ENCODE measurements at regions of chr19 and their contacts with region 1.

Region 1: GRCh38 chr19:49451430-49452181 is at the start of gene PIH1D1:
- DNase-seq: peak; percentile 99
- ATAC-seq: peak; percentile 69
- H3K4me3 ChIP-seq: peak within 1 kb of the TSS; percentile 98 to 100
- H3K27ac ChIP-seq: peak within 1 kb of the TSS; percentile 91
- H3K4me1 ChIP-seq: peaks cover 23 to 40% of the 10 kb centered on the region in 2 experiments; a peak in 3 of 4 replicates
- H3K27me3 ChIP-seq: no peaks in the 10 kb centered on the region
- CTCF ChIP-seq: peak in 1 of 3 experiments; percentile 32; a peak in 1 of 6 replicates
- POLR2A ChIP-seq: peak; percentile 86
- RAD21 ChIP-seq: no peak
- total RNA-seq, gene PIH1D1: 152 TPM

Region 2: GRCh38 chr19:49309087-49309486 is 142.5 kb before region 1 on chr19:
- CTCF ChIA-PET with region 1: no interaction called
- POLR2A ChIA-PET with region 1: no interaction called
- RAD21 ChIA-PET with region 1: no interaction called
- intact Hi-C with region 1: no loop called
- DNase-seq: no peak
- ATAC-seq: no peak
- H3K4me3 ChIP-seq: no peak overlapping the region
- H3K27ac ChIP-seq: no peak overlapping the region
- H3K4me1 ChIP-seq: no peaks in the 10 kb centered on the region
- H3K27me3 ChIP-seq: no peaks in the 10 kb centered on the region
- CTCF ChIP-seq: no peak
- POLR2A ChIP-seq: no peak
- RAD21 ChIP-seq: no peak

Region 3: GRCh38 chr19:49363268-49364082 is 88.1 kb before region 1 on chr19 and contains the start of gene DKKL1:
- CTCF ChIA-PET with region 1: no interaction called
- POLR2A ChIA-PET with region 1: interaction called, 14 read pairs
- RAD21 ChIA-PET with region 1: no interaction called
- intact Hi-C with region 1: no loop called
- DNase-seq: peak; percentile 99
- ATAC-seq: peak; percentile 86
- H3K4me3 ChIP-seq: peak within 1 kb of the TSS; percentile 93
- H3K27ac ChIP-seq: peak within 1 kb of the TSS; percentile 94
- H3K4me1 ChIP-seq: peaks cover 10 to 27% of the 10 kb centered on the region in 2 experiments
- H3K27me3 ChIP-seq: no peaks in the 10 kb centered on the region
- CTCF ChIP-seq: peak in 1 of 3 experiments; percentile 22; a peak in 3 of 6 replicates
- POLR2A ChIP-seq: no peak
- RAD21 ChIP-seq: no peak; the same call in none of the 2 replicates
- total RNA-seq, gene DKKL1: 1.0 TPM

Region 4: GRCh38 chr19:49473868-49474544 is 22.4 kb after region 1 on chr19 and contains the start of gene FLT3LG:
- CTCF ChIA-PET with region 1: interaction called, 11 read pairs
- POLR2A ChIA-PET with region 1: interaction called, 7 read pairs
- RAD21 ChIA-PET with region 1: interaction called in 1 of 2 experiments, 3 read pairs
- intact Hi-C with region 1: no loop called
- DNase-seq: no peak
- ATAC-seq: peak; percentile 41
- H3K4me3 ChIP-seq: peak within 1 kb of the TSS; percentile 54 to 71
- H3K27ac ChIP-seq: 0 out of 2 replicates have a peak within 1 kb of the TSS, but pooled peaks have one; percentile 19
- H3K4me1 ChIP-seq: peaks cover 33 to 57% of the 10 kb centered on the region in 2 experiments
- H3K27me3 ChIP-seq: no peaks in the 10 kb centered on the region
- CTCF ChIP-seq: peak; percentile 95 to 98 (median 95)
- POLR2A ChIP-seq: peak; percentile 23
- RAD21 ChIP-seq: peak; percentile 63
- total RNA-seq, gene FLT3LG: 3.8 TPM

Region 5: DNA sequence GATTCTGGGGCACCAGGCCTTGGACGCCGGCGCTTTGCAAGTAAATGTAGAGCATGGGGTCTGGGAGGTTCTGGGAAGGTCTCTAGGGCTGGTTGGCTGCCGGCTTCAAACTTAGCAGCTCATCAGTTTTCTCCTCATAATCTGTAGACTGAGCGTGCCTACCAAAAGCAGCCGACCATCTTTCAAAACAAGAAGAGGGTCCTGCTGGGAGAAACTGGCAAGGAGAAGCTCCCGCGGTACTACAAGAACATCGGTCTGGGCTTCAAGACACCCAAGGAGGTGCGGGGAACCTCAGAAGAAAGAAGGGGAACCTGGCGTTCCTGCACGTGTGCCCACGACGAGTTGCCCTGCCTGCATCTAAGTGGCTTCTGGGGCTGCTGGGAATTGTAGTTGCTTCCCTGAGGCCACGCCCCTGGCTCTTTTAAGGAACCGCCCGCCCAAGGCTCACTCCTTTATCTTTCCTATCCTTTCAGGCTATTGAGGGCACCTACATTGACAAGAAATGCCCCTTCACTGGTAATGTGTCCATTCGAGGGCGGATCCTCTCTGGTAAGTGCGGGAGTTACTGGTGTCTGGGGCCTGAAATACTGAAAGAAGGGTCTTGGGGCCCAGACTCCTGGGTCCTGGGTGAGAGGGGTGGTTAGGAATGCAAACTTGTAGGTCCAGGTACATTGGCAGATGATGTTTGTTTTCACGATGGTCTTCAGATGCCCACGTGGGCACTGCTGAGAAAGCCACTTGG is 45.6 kb after region 1 on chr19:
- CTCF ChIA-PET with region 1: no interaction called
- POLR2A ChIA-PET with region 1: interaction called, 17 read pairs
- RAD21 ChIA-PET with region 1: no interaction called
- intact Hi-C with region 1: no loop called
- DNase-seq: no peak
- ATAC-seq: no peak
- H3K4me3 ChIP-seq: peak overlapping the region; percentile 90 to 96
- H3K27ac ChIP-seq: peak overlapping the region; percentile 86
- H3K4me1 ChIP-seq: peaks cover 15 to 61% of the 10 kb centered on the region in 2 experiments
- H3K27me3 ChIP-seq: no peaks in the 10 kb centered on the region
- CTCF ChIP-seq: no peak
- POLR2A ChIP-seq: no peak
- RAD21 ChIP-seq: no peak